ENCODE measurements at regions of chr6 and their contacts with region 1.

Region 1: GRCh38 chr6:129370268-129370916 is 339.6 kb downstream of the ARHGAP18 start:
- DNase-seq: peak; percentile 66
- ATAC-seq: peak; percentile 27; the same call in 1 of the 2 replicates
- H3K4me3 ChIP-seq: peak overlapping the region; percentile 15; the same call in 1 of the 2 replicates
- H3K27ac ChIP-seq: no peak overlapping the region
- H3K4me1 ChIP-seq: no peaks in the 10 kb centered on the region
- H3K27me3 ChIP-seq: no peaks in the 10 kb centered on the region
- CTCF ChIP-seq: peak; percentile 79

Region 2: GRCh38 chr6:128731249-128732165 is 638.9 kb before region 1 on chr6:
- CTCF ChIA-PET with region 1: no interaction called
- POLR2A ChIA-PET with region 1: no interaction called
- intact Hi-C with region 1: loop called (anchors 10 kb)
- DNase-seq: peak; percentile 65
- ATAC-seq: peak; percentile 74
- H3K4me3 ChIP-seq: no peak overlapping the region
- H3K27ac ChIP-seq: no peak overlapping the region
- H3K4me1 ChIP-seq: no peaks in the 10 kb centered on the region
- H3K27me3 ChIP-seq: no peaks in the 10 kb centered on the region
- CTCF ChIP-seq: peak; percentile 77

Region 3: DNA sequence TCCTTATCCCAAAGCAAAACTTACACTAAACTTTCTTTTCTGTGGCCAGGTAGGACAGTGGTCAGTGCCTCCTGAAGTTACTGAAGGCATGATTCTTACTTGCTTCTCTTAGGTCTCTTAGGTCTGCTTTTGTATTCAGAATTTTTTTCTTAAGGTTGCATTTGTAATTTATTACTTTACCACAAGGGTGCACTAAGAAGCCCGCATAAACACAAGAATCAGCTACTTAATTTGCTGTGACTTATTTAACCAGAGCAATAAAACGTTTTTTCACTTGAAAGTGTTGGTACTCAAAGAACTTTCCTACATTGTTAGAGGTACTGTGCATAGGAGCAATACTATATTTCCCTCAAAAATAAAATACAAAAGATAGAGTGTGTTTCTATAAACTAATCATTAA is 562.8 kb before region 1 on chr6:
- CTCF ChIA-PET with region 1: interaction called, 11 read pairs
- POLR2A ChIA-PET with region 1: no interaction called
- intact Hi-C with region 1: loop called (anchors 2 kb)
- DNase-seq: peak; percentile 44
- ATAC-seq: 0 out of 2 replicates have a peak, but pooled peaks have one; percentile 38
- H3K4me3 ChIP-seq: no peak overlapping the region
- H3K27ac ChIP-seq: no peak overlapping the region
- H3K4me1 ChIP-seq: no peaks in the 10 kb centered on the region
- H3K27me3 ChIP-seq: no peaks in the 10 kb centered on the region
- CTCF ChIP-seq: peak; percentile 67

Region 4: GRCh38 chr6:129130959-129131681 is 239.3 kb before region 1 on chr6:
- CTCF ChIA-PET with region 1: no interaction called
- POLR2A ChIA-PET with region 1: no interaction called
- intact Hi-C with region 1: loop called (anchors 10 kb)
- DNase-seq: no peak
- ATAC-seq: no peak
- H3K4me3 ChIP-seq: no peak overlapping the region
- H3K27ac ChIP-seq: no peak overlapping the region
- H3K4me1 ChIP-seq: no peaks in the 10 kb centered on the region
- H3K27me3 ChIP-seq: no peaks in the 10 kb centered on the region
- CTCF ChIP-seq: no peak

Region 5: DNA sequence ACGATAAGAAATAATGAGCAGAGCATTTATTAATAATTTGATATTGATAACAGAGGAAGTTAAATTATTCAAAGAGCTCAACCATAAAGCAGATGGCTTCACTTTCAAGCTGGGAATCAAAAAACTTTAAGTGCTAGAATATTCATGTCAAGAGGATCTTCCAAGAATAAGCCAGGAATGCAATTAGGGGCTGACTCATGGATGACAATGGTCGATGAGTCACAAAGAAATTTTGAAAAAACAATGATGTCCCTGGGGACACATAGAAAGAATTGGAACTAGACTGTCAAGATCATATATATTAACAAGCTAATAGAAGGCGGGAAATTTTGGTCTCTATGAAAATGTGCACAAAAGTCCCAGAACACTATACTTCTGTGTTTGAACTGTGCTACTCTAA is 183.4 kb before region 1 on chr6:
- CTCF ChIA-PET with region 1: no interaction called
- POLR2A ChIA-PET with region 1: no interaction called
- intact Hi-C with region 1: loop called (anchors 1 kb)
- DNase-seq: peak; percentile 87
- ATAC-seq: peak; percentile 76
- H3K4me3 ChIP-seq: no peak overlapping the region
- H3K27ac ChIP-seq: no peak overlapping the region
- H3K4me1 ChIP-seq: peaks cover 30% of the 10 kb centered on the region
- H3K27me3 ChIP-seq: no peaks in the 10 kb centered on the region
- CTCF ChIP-seq: no peak

Region 6: DNA sequence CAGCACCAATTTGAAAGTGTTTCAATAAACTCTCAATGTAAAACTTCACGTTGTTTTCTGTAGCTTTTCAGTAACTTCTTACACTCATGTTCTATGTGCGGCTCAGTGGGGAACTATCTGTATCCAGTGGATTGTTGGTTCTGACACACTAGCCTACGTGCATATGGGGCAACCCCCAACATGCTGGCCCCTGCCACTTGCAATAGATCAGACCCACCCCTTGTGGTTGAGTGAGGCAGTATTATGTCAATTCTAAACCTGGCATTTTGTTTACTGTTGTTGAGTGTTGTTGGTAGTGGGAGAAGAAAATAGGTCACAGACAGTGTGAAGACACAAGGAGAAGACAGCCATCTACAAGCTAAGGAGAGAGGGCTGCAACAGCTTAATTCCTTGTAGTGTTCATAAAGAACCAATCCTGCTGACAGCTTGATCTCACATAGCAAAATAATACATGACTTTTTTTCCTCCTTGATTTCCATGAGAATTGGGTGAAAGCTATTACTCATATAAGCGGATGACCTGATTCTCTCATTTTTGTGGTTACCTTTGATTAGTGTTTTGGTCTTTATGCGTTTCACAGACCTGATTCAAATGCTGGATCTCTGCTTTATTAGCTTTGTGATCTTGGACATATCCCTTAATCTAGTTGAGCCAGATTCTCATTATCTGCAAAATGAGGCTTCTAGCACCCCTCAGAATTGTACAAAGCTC is 167.0 kb before region 1 on chr6:
- CTCF ChIA-PET with region 1: no interaction called
- POLR2A ChIA-PET with region 1: no interaction called
- intact Hi-C with region 1: no loop called
- DNase-seq: no peak
- ATAC-seq: no peak
- H3K4me3 ChIP-seq: no peak overlapping the region
- H3K27ac ChIP-seq: no peak overlapping the region
- H3K4me1 ChIP-seq: peaks cover 4% of the 10 kb centered on the region; the same call in 1 of the 2 replicates
- H3K27me3 ChIP-seq: no peaks in the 10 kb centered on the region
- CTCF ChIP-seq: no peak

Region 7: GRCh38 chr6:129251669-129252376 is 118.6 kb before region 1 on chr6:
- CTCF ChIA-PET with region 1: no interaction called
- POLR2A ChIA-PET with region 1: no interaction called
- intact Hi-C with region 1: loop called (anchors 1 kb)
- DNase-seq: peak; percentile 83
- ATAC-seq: peak; percentile 57
- H3K4me3 ChIP-seq: no peak overlapping the region
- H3K27ac ChIP-seq: no peak overlapping the region
- H3K4me1 ChIP-seq: peaks cover 15% of the 10 kb centered on the region
- H3K27me3 ChIP-seq: no peaks in the 10 kb centered on the region
- CTCF ChIP-seq: peak; percentile 74

Region 8: DNA sequence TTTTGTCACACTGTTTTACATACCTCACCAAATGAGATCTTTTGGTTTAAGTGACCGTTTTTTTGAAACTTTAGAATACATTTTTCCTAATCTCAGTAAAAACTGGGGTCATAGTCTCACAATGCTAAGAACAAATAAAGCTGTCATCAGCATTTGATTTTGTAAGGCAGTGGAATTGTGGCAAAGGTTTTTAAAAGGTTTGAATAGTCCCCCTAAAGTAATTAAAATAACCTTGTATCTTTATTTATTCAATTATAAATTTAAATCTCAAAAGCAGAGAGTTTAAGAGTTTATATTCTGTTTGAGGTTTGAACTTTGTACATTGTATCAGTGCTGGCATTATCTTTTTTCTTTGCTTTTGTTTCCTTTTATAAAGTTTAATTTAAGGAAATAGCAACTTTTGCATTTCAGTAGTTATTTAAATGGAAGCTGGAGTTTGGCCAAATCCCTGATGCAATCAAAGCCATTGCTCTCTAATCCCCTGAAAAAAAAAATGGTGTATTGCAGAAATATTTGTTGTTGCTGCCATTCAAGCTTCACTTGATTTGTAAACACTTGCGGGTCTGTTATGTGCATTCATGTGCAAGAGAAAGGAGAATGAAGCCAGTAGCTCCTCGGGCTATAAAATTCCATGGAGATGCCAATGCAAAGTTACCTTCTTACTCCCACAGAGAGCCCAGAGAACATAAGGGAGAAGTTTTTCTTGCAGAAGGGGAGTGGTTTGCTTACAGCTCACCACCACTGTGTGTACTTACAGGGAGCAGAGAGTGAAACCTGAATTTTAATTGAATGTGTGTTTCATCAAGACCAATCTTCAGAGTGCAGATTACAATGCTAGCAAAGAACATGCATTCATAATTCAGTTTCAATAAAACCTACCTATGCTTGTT is 52.2 kb before region 1 on chr6:
- CTCF ChIA-PET with region 1: interaction called, 3 read pairs
- POLR2A ChIA-PET with region 1: no interaction called
- intact Hi-C with region 1: loop called (anchors 1 kb)
- DNase-seq: peak; percentile 87
- ATAC-seq: peak; percentile 97
- H3K4me3 ChIP-seq: no peak overlapping the region; the same call in 1 of the 2 replicates
- H3K27ac ChIP-seq: peak overlapping the region; percentile 50
- H3K4me1 ChIP-seq: peaks cover 33% of the 10 kb centered on the region
- H3K27me3 ChIP-seq: no peaks in the 10 kb centered on the region
- CTCF ChIP-seq: no peak

Measured in PC-3 (cell line).